Activated T-helper 1 cell treated with anti-CD3 and anti-CD28 coated beads, Interleukin-12 subunit alpha, Interleukin-12 subunit beta, Interleukin-2, Interleukin-4 antibody, amounts not matched to agents 30 ng/mL and 10 ng/mL and 1 ng/mL, durations not matched to agents 14 hours and 24 hours and 36 hours (primary cell): ENCODE measurements at regions of chr22 and their contacts with region 1.

Region 1: DNA sequence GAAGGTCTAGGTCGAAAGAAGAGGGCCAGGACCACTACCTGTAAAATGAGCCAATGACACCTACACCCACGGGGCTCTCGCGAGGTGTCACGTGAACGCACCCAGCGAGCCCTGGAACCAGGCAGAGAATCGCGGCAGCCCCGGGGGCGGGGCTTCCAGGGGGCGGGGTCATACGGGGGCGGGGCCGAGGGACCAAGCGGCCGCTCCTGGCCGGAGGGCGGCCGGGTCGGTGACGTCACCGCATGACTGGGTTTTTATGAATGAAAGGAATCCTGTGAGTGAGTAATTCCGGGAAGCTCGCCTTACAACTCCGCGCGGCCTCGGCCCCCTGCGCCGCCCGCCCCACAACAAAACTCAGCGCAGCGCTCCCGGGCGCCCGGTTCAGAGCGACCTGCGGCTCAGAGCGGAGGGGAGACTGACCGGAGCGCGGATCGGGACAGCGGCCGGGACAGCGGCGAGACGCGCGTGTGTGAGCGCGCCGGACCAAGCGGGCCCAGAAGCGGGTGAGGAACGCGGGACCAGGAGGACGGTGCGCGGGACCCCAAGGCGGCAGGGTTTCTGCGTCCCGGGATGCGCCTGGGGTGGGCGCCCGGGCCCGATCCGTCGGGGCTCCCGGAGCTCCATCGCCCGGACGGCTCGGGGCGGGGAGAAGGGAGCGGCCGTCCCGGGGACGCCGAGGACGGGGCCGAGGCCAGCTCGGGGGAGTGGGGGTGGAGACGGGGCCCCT is at the start of gene MAFF:
- DNase-seq: peak; percentile 80
- H3K4me3 Mint-ChIP-seq: peak within 1 kb of the TSS; percentile 89
- H3K27ac Mint-ChIP-seq: peak within 1 kb of the TSS; percentile 82
- H3K4me1 Mint-ChIP-seq: peaks cover 42% of the 10 kb centered on the region
- H3K27me3 Mint-ChIP-seq: peaks cover 3% of the 10 kb centered on the region
- total RNA-seq, gene MAFF: 12.3 and 12.5 TPM in 2 replicates

Region 2: GRCh38 chr22:38114484-38115398 is 87.1 kb before region 1 on chr22:
- intact Hi-C with region 1: loop called (anchors 2 kb)
- DNase-seq: peak; percentile 67
- H3K4me3 Mint-ChIP-seq: no peak overlapping the region
- H3K27ac Mint-ChIP-seq: no peak overlapping the region
- H3K4me1 Mint-ChIP-seq: no peaks in the 10 kb centered on the region
- H3K27me3 Mint-ChIP-seq: no peaks in the 10 kb centered on the region

Region 3: DNA sequence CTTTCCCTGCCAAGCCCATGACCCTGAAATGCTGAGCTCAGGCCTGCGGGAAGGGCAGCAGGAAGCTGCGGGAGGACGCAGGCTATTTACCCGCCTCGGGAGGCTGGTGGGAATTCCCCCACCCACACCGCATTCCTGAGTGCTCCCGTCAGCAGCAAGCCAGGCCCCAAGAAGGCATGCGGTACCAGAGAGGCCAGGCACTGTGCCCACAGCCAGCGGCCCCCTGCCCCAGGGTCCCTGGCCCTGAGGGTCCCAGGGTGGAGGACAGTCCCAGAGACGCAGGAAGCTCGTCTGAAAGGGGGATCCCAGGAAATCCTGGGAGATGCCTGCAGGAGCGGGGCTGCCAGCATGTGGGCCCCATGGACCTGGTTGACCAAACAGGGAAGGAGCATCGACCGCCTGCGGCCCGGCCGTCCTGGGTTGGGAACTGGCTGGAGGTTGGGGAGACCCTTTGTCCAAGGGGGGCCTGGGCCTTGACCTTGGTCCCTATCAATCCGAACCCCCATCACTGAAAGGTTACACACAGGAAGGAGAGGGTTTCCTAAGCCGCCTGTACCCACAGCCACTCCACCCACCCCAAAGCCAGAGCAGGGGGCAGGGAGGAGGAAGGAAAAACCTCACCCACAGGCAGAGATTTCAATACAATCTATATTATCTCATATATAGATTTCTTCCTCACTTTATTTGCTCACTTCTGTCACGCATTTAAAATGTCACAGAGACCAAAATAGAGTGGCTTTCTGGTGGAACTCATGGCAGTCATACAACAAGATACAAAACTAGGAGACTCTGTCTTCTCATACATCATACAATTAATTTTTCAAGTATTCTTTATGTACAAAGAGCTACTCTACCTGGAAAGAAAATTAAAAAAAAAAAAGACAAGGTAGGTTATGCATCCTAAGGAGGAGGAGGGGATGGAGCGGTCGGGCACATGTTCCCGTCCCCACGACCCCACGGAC is 17.1 kb after region 1 on chr22:
- intact Hi-C with region 1: loop called (anchors 1 kb)
- DNase-seq: no peak
- H3K4me3 Mint-ChIP-seq: no peak overlapping the region
- H3K27ac Mint-ChIP-seq: peak overlapping the region; percentile 2
- H3K4me1 Mint-ChIP-seq: peaks cover 15% of the 10 kb centered on the region
- H3K27me3 Mint-ChIP-seq: no peaks in the 10 kb centered on the region

Region 4: DNA sequence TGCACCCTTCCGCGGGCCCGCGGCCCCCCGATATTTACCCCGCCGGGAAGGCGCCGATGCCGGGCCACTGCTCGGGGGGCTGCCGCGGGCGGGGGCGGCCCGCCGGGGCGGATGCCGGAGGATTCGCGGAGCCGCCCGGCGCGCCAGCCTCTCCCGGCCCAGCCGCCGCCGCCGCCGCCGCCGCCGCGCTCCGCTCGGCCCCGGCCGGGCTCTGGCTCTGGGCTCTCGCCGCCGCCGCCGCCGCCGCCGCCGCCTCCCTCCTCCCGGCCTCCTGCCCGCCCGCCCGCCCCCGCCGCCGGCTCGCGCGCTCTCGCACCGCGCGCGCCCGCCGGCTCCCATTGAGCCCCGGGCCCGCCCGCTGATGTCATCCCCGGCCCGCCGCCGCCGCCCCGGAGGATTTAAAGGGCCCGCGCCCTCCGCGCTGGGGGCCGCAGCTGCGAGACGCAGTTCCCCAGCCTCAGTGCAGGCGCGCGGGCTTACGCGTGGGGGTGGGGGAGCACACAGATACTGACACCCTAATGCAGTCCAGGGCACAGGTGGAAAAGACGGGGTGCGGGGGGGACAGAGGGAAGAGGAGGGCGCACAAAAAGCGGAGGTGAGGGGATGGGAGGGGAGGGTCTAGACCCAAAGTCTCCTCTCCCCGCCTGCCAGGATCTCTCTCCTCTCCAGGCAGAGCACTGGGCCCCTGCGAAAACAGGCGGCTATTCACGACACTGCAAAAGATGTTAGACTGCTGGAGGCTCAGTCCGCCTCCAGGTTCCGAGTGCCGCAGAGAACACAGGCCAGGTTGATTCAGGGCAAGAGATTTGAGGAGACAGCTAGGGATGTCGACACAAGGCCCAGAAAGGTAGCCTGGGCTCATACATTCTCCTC is 115.5 kb after region 1 on chr22 and contains the start of gene CSNK1E:
- intact Hi-C with region 1: loop called (anchors 2 kb)
- DNase-seq: peak; percentile 74
- H3K4me3 Mint-ChIP-seq: peak within 1 kb of the TSS; percentile 90
- H3K27ac Mint-ChIP-seq: peak within 1 kb of the TSS; percentile 87
- H3K4me1 Mint-ChIP-seq: peaks cover 44% of the 10 kb centered on the region
- H3K27me3 Mint-ChIP-seq: no peaks in the 10 kb centered on the region
- total RNA-seq, gene CSNK1E: 151 and 154 TPM in 2 replicates

Region 5: GRCh38 chr22:38327805-38328204 is 125.9 kb after region 1 on chr22:
- intact Hi-C with region 1: no loop called
- DNase-seq: no peak
- H3K4me3 Mint-ChIP-seq: no peak overlapping the region
- H3K27ac Mint-ChIP-seq: peak overlapping the region; percentile 22
- H3K4me1 Mint-ChIP-seq: no peaks in the 10 kb centered on the region
- H3K27me3 Mint-ChIP-seq: peaks cover 2% of the 10 kb centered on the region